ENCODE measurements at regions of chr6 and their contacts with region 1.

Region 1: GRCh38 chr6:7803219-7803618 is 77.3 kb downstream of the BMP6 start:
- DNase-seq: peak in 1 of 9 experiments; percentile 22
- ATAC-seq: no peak
- H3K4me3 ChIP-seq: no peak overlapping the region
- H3K4me3 Mint-ChIP-seq: no peak overlapping the region
- H3K27ac ChIP-seq: no peak overlapping the region
- H3K27ac Mint-ChIP-seq: no peak overlapping the region
- H3K4me1 ChIP-seq: no peaks in the 10 kb centered on the region
- H3K4me1 Mint-ChIP-seq: no peaks in the 10 kb centered on the region
- H3K27me3 ChIP-seq: no peaks in the 10 kb centered on the region
- H3K27me3 Mint-ChIP-seq: peaks cover 12% of the 10 kb centered on the region
- CTCF ChIP-seq: no peak

Region 2: DNA sequence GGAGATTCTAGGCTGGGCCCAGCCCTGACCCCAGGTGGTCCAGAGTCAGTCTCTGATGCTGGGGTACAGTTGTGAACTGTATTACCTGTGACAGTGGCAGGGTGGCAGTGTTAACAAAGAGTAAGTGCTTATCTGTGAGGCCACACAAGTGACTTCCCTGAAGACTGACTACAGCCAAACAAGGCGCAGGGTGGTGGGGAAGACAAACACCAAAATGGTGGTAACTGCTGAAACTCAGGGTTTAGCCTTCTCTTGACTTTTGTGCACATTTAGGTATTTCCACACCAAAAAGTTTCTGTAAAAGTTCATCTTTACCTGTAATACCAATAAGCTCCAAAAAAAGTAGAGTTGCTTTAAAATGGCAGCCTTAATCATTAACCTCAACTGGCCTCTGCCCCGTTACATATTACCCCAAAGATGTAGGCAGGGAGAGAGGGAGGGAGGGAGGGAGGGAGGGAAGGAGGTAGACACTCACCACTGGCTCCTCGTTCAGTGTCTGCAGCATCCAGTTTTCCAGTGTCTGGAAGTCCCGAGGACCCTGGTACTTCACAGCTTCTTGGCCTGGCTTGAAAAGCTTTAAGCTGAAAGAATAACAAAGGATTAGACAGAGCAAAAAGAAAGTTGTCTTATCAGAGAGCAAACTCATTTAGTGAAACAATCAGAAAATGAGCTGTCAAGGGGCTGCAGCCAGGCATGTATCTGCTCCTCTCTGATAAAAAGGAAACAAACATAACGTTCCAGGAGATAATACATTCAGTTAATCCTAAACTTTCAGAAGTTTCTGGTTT is 96.1 kb after region 1 on chr6:
- CTCF ChIA-PET with region 1: no interaction called
- POLR2A ChIA-PET with region 1: no interaction called
- intact Hi-C with region 1: no loop called
- DNase-seq: peak in 2 of 9 experiments; percentile 10 to 25
- ATAC-seq: no peak
- H3K4me3 ChIP-seq: no peak overlapping the region
- H3K4me3 Mint-ChIP-seq: no peak overlapping the region
- H3K27ac ChIP-seq: no peak overlapping the region
- H3K27ac Mint-ChIP-seq: no peak overlapping the region
- H3K4me1 ChIP-seq: no peaks in the 10 kb centered on the region
- H3K4me1 Mint-ChIP-seq: no peaks in the 10 kb centered on the region
- H3K27me3 ChIP-seq: no peaks in the 10 kb centered on the region
- H3K27me3 Mint-ChIP-seq: no peaks in the 10 kb centered on the region
- CTCF ChIP-seq: no peak

Region 3: GRCh38 chr6:8743168-8743745 is 940.0 kb after region 1 on chr6:
- CTCF ChIA-PET with region 1: no interaction called
- POLR2A ChIA-PET with region 1: no interaction called
- intact Hi-C with region 1: loop called in 1 of 2 experiments (anchors 5 kb)
- DNase-seq: peak in 1 of 9 experiments; percentile 12
- ATAC-seq: no peak
- H3K4me3 ChIP-seq: peak overlapping the region in 1 of 2 experiments; percentile 36
- H3K4me3 Mint-ChIP-seq: peak overlapping the region; percentile 65
- H3K27ac ChIP-seq: no peak overlapping the region
- H3K27ac Mint-ChIP-seq: no peak overlapping the region
- H3K4me1 ChIP-seq: no peaks in the 10 kb centered on the region
- H3K4me1 Mint-ChIP-seq: peaks cover 7% of the 10 kb centered on the region
- H3K27me3 ChIP-seq: no peaks in the 10 kb centered on the region
- H3K27me3 Mint-ChIP-seq: no peaks in the 10 kb centered on the region
- CTCF ChIP-seq: no peak